HepG2 (cell line): ENCODE measurements at regions of chr11 and their contacts with region 1.

Region 1: DNA sequence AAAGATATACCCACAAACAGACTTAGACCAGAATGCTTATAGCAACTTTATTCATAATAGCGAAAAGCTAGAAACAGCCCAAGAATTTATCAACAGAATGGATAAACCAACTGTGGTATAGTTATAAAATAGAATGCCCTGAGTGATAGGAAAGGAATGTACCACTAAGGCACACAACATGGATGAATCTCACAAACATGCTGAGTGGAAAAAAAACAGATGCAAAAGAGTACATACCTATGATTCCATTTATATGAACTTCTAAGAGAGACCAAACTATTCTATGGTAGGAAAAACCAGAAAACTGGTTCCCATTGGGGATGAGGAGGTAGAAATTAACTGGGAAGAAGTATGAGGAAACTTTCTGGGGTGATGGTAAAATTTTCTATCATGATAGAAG is 40.4 kb upstream of the GRIK4 start:
- DNase-seq: no peak
- ATAC-seq: no peak
- H3K4me3 ChIP-seq: no peak overlapping the region
- H3K27ac ChIP-seq: no peak overlapping the region
- H3K4me1 ChIP-seq: no peaks in the 10 kb centered on the region
- H3K27me3 ChIP-seq: no peaks in the 10 kb centered on the region
- CTCF ChIP-seq: no peak
- EP300 ChIP-seq: no peak
- POLR2A ChIP-seq: no peak
- RAD21 ChIP-seq: no peak

Region 2: DNA sequence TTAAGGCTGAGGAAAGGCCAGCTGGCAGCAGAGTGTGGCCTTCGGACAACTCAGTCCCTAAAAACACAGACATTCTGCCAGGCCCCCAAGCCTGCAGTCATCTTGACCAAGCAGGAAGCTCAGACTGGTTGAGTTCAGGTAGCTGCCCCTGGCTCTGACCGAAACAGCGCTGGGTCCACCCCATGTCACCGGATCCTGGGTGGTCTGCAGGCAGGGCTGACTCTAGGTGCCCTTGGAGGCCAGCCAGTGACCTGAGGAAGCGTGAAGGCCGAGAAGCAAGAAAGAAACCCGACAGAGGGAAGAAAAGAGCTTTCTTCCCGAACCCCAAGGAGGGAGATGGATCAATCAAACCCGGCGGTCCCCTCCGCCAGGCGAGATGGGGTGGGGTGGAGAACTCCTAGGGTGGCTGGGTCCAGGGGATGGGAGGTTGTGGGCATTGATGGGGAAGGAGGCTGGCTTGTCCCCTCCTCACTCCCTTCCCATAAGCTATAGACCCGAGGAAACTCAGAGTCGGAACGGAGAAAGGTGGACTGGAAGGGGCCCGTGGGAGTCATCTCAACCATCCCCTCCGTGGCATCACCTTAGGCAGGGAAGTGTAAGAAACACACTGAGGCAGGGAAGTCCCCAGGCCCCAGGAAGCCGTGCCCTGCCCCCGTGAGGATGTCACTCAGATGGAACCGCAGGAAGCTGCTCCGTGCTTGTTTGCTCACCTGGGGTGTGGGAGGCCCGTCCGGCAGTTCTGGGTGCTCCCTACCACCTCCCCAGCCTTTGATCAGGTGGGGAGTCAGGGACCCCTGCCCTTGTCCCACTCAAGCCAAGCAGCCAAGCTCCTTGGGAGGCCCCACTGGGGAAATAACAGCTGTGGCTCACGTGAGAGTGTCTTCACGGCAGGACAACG is 1575.7 kb before region 1 on chr11:
- CTCF ChIA-PET with region 1: no interaction called
- POLR2A ChIA-PET with region 1: no interaction called
- in situ Hi-C with region 1: no loop called
- intact Hi-C with region 1: loop called (anchors 10 kb)
- DNase-seq: no peak
- ATAC-seq: peak; percentile 25
- H3K4me3 ChIP-seq: no peak overlapping the region
- H3K27ac ChIP-seq: no peak overlapping the region
- H3K4me1 ChIP-seq: 0 out of 2 replicates have a peak, but pooled peaks cover 7% of the 10 kb centered on the region
- H3K27me3 ChIP-seq: peaks cover 3 to 17% of the 10 kb centered on the region in 2 experiments; a peak in 4 of 5 replicates
- CTCF ChIP-seq: peak; percentile 33
- EP300 ChIP-seq: no peak
- POLR2A ChIP-seq: 0 out of 4 replicates have a peak, but pooled peaks of 1 of the 2 experiments have one; percentile 17
- RAD21 ChIP-seq: no peak

Region 3: GRCh38 chr11:120500414-120501071 is 29.4 kb after region 1 on chr11:
- CTCF ChIA-PET with region 1: no interaction called
- POLR2A ChIA-PET with region 1: no interaction called
- in situ Hi-C with region 1: no loop called
- intact Hi-C with region 1: no loop called
- DNase-seq: no peak
- ATAC-seq: peak; percentile 61
- H3K4me3 ChIP-seq: no peak overlapping the region
- H3K27ac ChIP-seq: no peak overlapping the region
- H3K4me1 ChIP-seq: peaks cover 3% of the 10 kb centered on the region
- H3K27me3 ChIP-seq: no peaks in the 10 kb centered on the region; a peak in 1 of 5 replicates
- CTCF ChIP-seq: no peak
- EP300 ChIP-seq: no peak
- POLR2A ChIP-seq: no peak
- RAD21 ChIP-seq: no peak